Colonic mucosa (tissue), 4 donors: ENCODE measurements at regions of chr12 and their contacts with region 1.

Region 1: DNA sequence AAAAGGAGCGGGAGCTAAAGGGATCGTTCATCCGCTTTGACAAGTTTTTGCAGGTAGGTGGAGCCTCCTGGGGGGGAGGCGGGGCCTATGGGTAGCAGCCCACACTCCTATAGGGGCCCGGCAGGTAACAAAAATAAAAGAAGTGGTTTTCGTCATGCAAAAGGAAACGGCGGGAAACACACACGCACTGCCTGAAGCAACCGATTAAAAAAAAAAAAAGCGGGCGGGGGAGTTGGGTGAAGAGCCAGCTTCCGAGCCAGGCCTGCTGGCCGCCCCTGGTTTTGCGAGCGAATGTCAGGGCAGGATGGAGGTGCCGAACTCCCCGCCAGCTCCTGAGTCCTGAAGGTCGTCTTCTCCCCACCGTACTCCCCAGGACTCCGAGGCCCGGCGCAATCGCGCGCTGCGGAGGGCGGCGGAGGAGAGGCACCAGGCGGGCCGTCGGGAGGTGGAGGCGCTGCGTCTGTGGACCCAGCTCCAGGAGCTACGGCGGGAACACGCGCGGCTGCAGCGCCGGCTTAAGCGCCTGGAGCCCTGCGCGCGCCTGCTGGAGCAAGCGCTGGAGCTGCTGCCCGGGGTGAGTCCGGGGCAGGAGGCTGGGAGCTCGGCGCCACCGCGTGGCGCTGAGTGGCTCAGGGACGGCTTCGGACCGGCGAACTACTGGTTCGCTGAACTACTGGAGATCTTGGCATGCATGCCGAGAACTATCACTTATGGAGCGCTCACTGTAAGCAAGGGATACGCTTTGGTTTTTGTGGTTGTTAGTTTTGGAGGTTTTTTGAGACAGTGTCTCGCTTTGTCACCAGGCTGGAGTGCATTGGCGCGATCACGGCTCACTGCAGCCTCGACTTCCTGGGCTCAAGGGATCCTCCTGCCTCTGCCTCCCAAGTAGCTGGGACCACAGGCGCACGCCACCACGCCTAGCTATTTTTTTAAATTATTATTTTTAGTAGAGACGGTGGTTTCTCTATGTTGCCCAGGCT is 3.6 kb downstream of the CFAP73 start:
- DNase-seq: peak; percentile 70
- H3K4me3 ChIP-seq: peak overlapping the region; percentile 42
- H3K27ac ChIP-seq: no peak overlapping the region
- H3K4me1 ChIP-seq: peaks cover 9% of the 10 kb centered on the region
- H3K27me3 ChIP-seq: peaks cover 14% of the 10 kb centered on the region
- CTCF ChIP-seq: peak; percentile 35

Region 2: DNA sequence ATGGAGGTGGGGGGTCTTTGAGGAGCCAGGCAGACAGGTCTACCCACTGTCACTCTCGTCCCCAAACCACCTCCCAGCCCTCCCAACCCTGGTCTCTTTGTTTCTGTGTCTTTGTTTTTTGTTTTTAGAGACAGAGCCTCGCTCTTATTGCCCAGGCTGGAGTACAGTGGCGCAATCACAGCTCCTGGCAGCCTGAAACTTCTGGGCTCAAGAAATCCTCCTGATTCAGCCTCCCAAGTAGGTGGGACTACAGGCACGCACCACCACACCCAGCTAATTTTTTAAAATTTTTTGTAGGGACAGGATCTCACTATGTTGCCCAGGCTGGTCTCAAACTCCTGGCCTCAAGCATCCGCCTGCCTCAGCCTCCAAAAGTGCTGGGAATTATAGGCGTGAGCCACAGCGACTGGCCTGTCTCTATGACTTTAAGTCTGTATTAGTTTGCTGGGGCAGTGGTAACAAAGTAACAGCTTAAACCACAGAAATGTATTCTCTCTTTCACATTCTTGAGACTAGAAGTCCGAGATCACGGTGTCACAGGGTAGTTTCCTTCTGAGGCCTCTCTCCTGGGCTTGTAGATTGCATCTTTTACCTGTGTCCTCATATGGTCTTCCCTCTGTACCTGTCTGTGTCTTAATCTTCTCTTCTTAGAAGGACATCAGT is 70.5 kb before region 1 on chr12:
- intact Hi-C with region 1: no loop called
- DNase-seq: no peak
- H3K4me3 ChIP-seq: no peak overlapping the region
- H3K27ac ChIP-seq: no peak overlapping the region
- H3K4me1 ChIP-seq: no peaks in the 10 kb centered on the region
- H3K27me3 ChIP-seq: peaks cover 8% of the 10 kb centered on the region
- CTCF ChIP-seq: no peak

Region 3: GRCh38 chr12:113098446-113098896 is 54.7 kb before region 1 on chr12:
- intact Hi-C with region 1: loop called (anchors 10 kb)
- DNase-seq: peak; percentile 91
- H3K4me3 ChIP-seq: no peak overlapping the region
- H3K27ac ChIP-seq: no peak overlapping the region
- H3K4me1 ChIP-seq: no peaks in the 10 kb centered on the region
- H3K27me3 ChIP-seq: no peaks in the 10 kb centered on the region
- CTCF ChIP-seq: peak; percentile 75